ENCODE measurements at regions of chr6 and their contacts with region 1.

Region 1: GRCh38 chr6:70884074-70884983 is 72.5 kb downstream of the B3GAT2 start:
- DNase-seq: peak in 9 of 10 donors; percentile 24 to 68 (median 49)
- H3K4me3 ChIP-seq: no peak overlapping the region
- H3K27ac ChIP-seq: no peak overlapping the region
- H3K27me3 ChIP-seq: peaks cover 0 to 3% (median 0%) of the 10 kb centered on the region in 45 donors
- CTCF ChIP-seq: peak; percentile 78 to 97 (median 93)

Region 2: DNA sequence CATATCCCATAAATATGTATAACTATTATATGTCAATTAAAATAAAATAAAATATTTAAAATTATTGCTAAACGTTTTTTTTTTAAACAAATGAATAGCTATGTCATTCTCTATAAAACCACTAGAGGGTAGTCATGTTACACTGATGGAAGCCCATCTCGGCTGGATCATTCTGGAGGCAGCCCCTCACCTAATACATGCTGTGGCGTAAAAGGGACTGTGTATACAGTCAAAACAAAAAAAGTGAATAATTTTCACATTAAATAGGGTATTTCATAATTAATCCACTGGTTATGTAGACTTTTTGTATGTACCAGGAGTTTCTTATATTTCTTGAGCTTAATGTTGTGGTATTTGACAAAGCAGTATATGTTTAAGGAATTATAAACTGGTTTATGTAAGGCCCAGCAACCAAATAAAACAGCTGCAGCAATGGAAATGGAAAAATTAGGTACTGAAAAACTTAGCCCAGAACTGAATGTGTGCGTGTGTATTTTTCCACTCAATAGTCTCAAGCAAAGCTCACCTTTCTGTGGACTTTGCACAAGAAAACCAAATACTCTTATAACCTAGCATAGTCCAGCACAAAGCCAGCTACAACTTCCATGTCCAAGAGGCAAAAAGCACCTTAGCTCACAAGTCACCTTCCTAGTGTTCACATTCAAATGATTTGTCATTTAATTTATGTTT is 663.2 kb before region 1 on chr6:
- intact Hi-C with region 1: loop called in 1 of 2 experiments (anchors 5 kb)
- DNase-seq: peak in 1 of 10 donors; percentile 23
- H3K4me3 ChIP-seq: peak overlapping the region in 1 of 59 donors; percentile 17
- H3K27ac ChIP-seq: no peak overlapping the region
- H3K27me3 ChIP-seq: peaks cover 0 to 4% (median 0%) of the 10 kb centered on the region in 45 donors
- CTCF ChIP-seq: peak; percentile 76 to 98 (median 89)

Region 3: DNA sequence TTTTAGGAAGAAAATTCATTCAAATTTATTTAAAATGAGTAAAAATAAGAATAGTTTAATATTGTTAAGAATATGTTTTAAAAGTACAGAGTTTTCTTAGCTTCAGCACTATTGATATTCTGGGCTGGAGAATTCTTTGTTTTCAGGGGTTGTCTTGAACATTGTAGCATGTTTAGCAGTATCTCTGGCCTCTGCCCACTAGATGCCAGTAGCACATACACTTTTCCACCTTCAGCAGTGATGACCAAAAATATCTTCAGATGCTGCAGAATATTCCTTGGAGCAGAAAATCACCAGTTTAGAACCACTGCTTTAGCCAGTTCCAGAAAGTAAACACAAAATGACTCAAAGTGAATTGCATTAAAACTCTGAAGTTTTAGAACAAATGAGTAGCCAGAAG is 337.0 kb before region 1 on chr6:
- intact Hi-C with region 1: loop called in 1 of 2 experiments (anchors 10 kb)
- DNase-seq: no peak
- H3K4me3 ChIP-seq: no peak overlapping the region
- H3K27ac ChIP-seq: no peak overlapping the region
- H3K27me3 ChIP-seq: no peaks in the 10 kb centered on the region
- CTCF ChIP-seq: peak in 53 of 56 donors; percentile 20 to 75 (median 50)

Region 4: DNA sequence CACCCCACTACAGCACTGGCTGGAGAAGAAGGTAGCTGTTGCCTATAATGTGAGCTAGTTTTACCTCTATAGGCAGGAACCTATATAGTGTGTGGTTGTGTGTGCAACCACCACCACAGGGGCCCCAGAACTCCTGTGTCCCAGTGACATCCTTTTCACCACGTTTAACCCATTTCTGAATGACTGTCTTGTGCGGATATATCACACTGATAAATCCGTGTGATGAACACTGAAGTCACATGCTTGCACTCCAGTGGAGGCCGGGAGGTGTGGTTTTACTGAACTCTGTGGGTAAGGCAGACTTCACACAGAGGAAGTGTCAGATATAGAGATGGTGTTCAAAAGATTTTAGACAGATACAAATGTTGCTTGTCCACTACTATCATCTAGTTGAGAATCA is 285.1 kb before region 1 on chr6:
- intact Hi-C with region 1: no loop called
- DNase-seq: no peak
- H3K4me3 ChIP-seq: no peak overlapping the region
- H3K27ac ChIP-seq: no peak overlapping the region
- H3K27me3 ChIP-seq: no peaks in the 10 kb centered on the region
- CTCF ChIP-seq: no peak